ENCODE measurements at regions of chr19 and their contacts with region 1.

Region 1: DNA sequence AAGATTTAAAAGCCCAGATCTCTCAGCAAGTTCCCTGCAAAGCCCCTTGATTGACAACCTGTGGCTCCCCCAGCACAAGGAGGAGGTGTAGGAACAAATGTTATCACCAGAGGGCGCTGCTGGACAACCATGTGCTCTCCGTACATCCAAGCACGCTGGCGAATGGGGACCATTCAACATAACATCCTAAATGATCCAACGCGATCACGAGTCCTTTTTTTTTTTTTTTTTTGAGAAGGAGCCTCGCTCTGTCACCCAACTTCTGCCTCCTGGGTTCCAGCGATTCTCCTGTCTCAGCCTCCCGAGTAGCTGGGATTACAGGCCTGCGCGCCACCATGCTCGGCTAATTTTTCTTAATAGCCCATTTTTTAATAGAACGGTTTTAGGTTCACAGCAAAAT is 52.0 kb downstream of the NWD1 start:
- DNase-seq: peak; percentile 76
- H3K4me3 ChIP-seq: no peak overlapping the region
- H3K27ac ChIP-seq: no peak overlapping the region
- H3K4me1 ChIP-seq: no peaks in the 10 kb centered on the region
- H3K27me3 ChIP-seq: no peaks in the 10 kb centered on the region
- CTCF ChIP-seq: peak; percentile 50 to 84 (median 75)
- POLR2A ChIP-seq: no peak

Region 2: GRCh38 chr19:16714702-16715287 is 56.8 kb before region 1 on chr19:
- intact Hi-C with region 1: loop called (anchors 5 kb)
- DNase-seq: peak; percentile 46
- H3K4me3 ChIP-seq: no peak overlapping the region
- H3K27ac ChIP-seq: no peak overlapping the region
- H3K4me1 ChIP-seq: no peaks in the 10 kb centered on the region
- H3K27me3 ChIP-seq: no peaks in the 10 kb centered on the region
- CTCF ChIP-seq: peak; percentile 79 to 92 (median 86)
- POLR2A ChIP-seq: no peak

Region 3: DNA sequence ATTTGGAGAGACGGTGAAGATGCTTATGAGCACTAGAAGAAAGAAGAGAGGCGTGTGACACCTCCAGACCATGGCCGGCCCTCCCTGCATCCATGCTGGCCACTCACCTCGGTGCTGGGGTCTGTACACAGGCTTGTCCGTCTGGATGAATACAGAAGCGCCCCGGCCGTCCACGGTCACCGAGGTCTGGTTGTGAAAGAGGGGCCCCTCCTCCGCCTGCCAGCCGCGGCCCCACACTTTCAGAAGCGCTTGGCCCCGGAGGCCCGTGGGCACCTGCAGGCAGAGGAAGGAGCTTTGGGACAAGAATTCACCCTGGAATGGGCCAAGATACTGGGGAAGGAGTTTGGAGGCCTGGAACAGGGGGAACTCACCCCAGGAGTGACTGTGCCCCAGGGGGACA is 239.9 kb after region 1 on chr19:
- intact Hi-C with region 1: no loop called
- DNase-seq: no peak
- H3K4me3 ChIP-seq: no peak overlapping the region
- H3K27ac ChIP-seq: no peak overlapping the region
- H3K4me1 ChIP-seq: no peaks in the 10 kb centered on the region
- H3K27me3 ChIP-seq: no peaks in the 10 kb centered on the region
- CTCF ChIP-seq: no peak
- POLR2A ChIP-seq: no peak